ENCODE measurements at regions of chr14 and their contacts with region 1.

Region 1: GRCh38 chr14:96204151-96205058 is at the start of gene BDKRB2:
- DNase-seq: peak; percentile 92
- ATAC-seq: peak; percentile 86
- H3K4me3 ChIP-seq: peak within 1 kb of the TSS; percentile 88
- H3K27ac ChIP-seq: peak within 1 kb of the TSS; percentile 97
- H3K4me1 ChIP-seq: peaks cover 22% of the 10 kb centered on the region
- H3K27me3 ChIP-seq: no peaks in the 10 kb centered on the region
- CTCF ChIP-seq: no peak
- POLR2A ChIP-seq: peak; percentile 93
- RAD21 ChIP-seq: peak; percentile 42
- total RNA-seq, gene BDKRB2: 60.5 and 73.1 TPM in 2 replicates

Region 2: GRCh38 chr14:96122496-96122895 is 81.9 kb before region 1 on chr14:
- CTCF ChIA-PET with region 1: interaction called, 3 read pairs
- POLR2A ChIA-PET with region 1: interaction called, 4 read pairs
- dilution Hi-C with region 1: no loop called
- in situ Hi-C with region 1: no loop called
- intact Hi-C with region 1: loop called (anchors 1 kb)
- DNase-seq: peak; percentile 90
- ATAC-seq: peak; percentile 82
- H3K4me3 ChIP-seq: no peak overlapping the region
- H3K27ac ChIP-seq: peak overlapping the region; percentile 95
- H3K4me1 ChIP-seq: peaks cover 29% of the 10 kb centered on the region
- H3K27me3 ChIP-seq: no peaks in the 10 kb centered on the region
- CTCF ChIP-seq: no peak
- POLR2A ChIP-seq: no peak
- RAD21 ChIP-seq: 0 out of 2 replicates have a peak, but pooled peaks have one; percentile 9

Region 3: GRCh38 chr14:96145116-96145864 is 59.1 kb before region 1 on chr14:
- CTCF ChIA-PET with region 1: no interaction called
- POLR2A ChIA-PET with region 1: no interaction called
- dilution Hi-C with region 1: no loop called
- in situ Hi-C with region 1: no loop called
- intact Hi-C with region 1: loop called (anchors 2 kb)
- DNase-seq: peak; percentile 91
- ATAC-seq: peak; percentile 86
- H3K4me3 ChIP-seq: peak overlapping the region; percentile 4; the same call in 1 of the 2 replicates
- H3K27ac ChIP-seq: peak overlapping the region; percentile 98
- H3K4me1 ChIP-seq: peaks cover 13% of the 10 kb centered on the region
- H3K27me3 ChIP-seq: no peaks in the 10 kb centered on the region
- CTCF ChIP-seq: no peak
- POLR2A ChIP-seq: no peak
- RAD21 ChIP-seq: 0 out of 2 replicates have a peak, but pooled peaks have one; percentile 22

Region 4: DNA sequence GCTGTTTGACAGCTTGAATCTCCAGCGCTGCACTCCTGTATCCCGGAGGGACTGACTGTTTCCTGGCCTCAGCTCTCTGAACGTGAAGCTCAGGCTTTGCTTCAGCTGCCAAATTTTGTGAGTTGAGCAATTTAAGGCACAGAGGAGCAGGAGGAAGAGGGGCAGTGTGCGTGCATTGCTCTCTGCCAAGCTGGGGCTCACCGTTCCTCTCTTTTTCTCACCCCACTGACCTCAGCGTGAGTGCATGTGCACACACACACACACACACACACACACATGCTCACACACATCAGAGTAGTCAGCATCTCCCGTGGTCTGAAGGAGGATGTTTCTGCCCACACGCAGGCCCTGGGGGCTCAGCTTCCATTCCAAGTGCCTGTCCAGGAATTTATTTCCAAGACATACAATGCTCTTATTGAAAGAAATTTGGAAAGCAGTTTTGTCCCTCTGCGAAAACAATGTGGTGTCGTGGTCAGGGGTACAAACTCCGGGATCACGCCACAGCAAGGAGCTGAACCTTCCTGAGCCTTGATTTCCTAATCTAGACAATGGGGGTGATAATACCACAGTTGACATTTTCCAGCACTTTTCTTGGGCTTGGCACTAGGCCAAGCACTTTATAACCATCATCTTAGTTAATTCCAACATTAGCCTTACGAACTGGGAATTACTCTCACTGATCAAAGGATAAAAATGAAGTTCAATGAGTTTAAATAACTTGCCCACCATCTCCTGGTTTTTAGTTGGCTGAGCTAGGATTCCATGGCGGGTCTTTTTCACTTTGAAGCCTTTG is 27.4 kb before region 1 on chr14:
- CTCF ChIA-PET with region 1: no interaction called
- POLR2A ChIA-PET with region 1: interaction called, 4 read pairs
- dilution Hi-C with region 1: no loop called
- in situ Hi-C with region 1: no loop called
- intact Hi-C with region 1: loop called (anchors 2 kb)
- DNase-seq: peak; percentile 91
- ATAC-seq: peak; percentile 78
- H3K4me3 ChIP-seq: no peak overlapping the region
- H3K27ac ChIP-seq: peak overlapping the region; percentile 71
- H3K4me1 ChIP-seq: peaks cover 30% of the 10 kb centered on the region
- H3K27me3 ChIP-seq: no peaks in the 10 kb centered on the region
- CTCF ChIP-seq: no peak
- POLR2A ChIP-seq: no peak
- RAD21 ChIP-seq: no peak

Region 5: GRCh38 chr14:96255501-96256366 is 51.3 kb after region 1 on chr14 and contains the start of gene BDKRB1:
- CTCF ChIA-PET with region 1: no interaction called
- POLR2A ChIA-PET with region 1: interaction called, 11 read pairs
- dilution Hi-C with region 1: no loop called
- in situ Hi-C with region 1: no loop called
- intact Hi-C with region 1: no loop called
- DNase-seq: peak; percentile 96
- ATAC-seq: peak; percentile 24
- H3K4me3 ChIP-seq: peak within 1 kb of the TSS; percentile 59
- H3K27ac ChIP-seq: peak within 1 kb of the TSS; percentile 92
- H3K4me1 ChIP-seq: peaks cover 34% of the 10 kb centered on the region
- H3K27me3 ChIP-seq: no peaks in the 10 kb centered on the region
- CTCF ChIP-seq: no peak
- POLR2A ChIP-seq: peak; percentile 97
- RAD21 ChIP-seq: no peak
- total RNA-seq, gene BDKRB1: 51.4 and 56.5 TPM in 2 replicates

Region 6: DNA sequence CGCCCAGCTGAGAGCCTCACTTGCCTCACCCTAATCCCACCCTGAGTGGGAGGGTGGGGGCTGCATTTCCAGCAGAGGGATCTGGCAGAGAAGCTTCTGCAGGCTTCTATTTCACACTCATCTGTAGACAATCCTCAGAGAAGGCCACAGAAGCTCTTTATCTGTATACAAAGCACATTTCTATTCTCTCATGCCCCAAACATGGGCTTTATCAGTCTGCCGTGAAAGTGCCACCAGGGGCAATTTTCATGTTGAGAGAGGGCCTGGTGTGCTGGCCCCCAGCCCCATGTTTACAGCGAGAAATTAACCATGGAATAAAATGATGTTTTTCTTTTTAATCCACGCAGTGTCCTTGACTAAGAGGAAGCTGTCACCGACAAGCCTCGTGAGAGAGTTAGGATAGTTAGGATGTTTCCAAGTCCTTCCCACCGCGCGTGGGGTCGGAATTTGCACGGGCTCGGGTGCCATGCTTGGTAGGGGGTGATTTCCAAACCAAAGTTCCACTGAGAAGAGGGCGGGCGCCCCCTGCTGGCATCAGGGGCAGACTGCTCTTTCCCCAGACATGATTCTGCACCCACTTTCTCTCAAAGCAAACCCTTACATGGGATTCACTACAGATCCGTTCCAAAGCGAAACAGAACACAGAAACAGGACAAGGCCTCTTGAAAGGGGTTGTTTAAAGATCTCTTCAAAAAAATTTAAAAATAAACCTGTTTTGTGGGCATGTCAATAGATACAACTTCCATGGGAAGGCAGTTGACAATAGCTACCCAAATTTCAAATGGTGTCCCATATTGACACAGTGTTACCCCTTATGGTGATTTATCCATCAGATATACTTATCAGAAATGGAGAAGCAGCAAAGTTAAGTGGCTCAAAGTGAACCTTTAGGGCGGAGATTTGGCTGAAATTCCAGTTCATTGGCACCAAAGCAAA is 71.0 kb after region 1 on chr14:
- CTCF ChIA-PET with region 1: interaction called, 9 read pairs
- POLR2A ChIA-PET with region 1: no interaction called
- dilution Hi-C with region 1: no loop called
- in situ Hi-C with region 1: no loop called
- intact Hi-C with region 1: loop called (anchors 1 kb)
- DNase-seq: peak; percentile 90
- ATAC-seq: peak; percentile 72
- H3K4me3 ChIP-seq: no peak overlapping the region
- H3K27ac ChIP-seq: peak overlapping the region; percentile 94
- H3K4me1 ChIP-seq: peaks cover 23% of the 10 kb centered on the region
- H3K27me3 ChIP-seq: no peaks in the 10 kb centered on the region
- CTCF ChIP-seq: peak; percentile 99
- POLR2A ChIP-seq: peak; percentile 61
- RAD21 ChIP-seq: peak; percentile 98

Region 7: GRCh38 chr14:96486705-96487104 is 282.3 kb after region 1 on chr14:
- CTCF ChIA-PET with region 1: no interaction called
- POLR2A ChIA-PET with region 1: interaction called, 19 read pairs
- dilution Hi-C with region 1: no loop called
- in situ Hi-C with region 1: no loop called
- intact Hi-C with region 1: no loop called
- DNase-seq: no peak
- ATAC-seq: no peak
- H3K4me3 ChIP-seq: no peak overlapping the region
- H3K27ac ChIP-seq: no peak overlapping the region
- H3K4me1 ChIP-seq: no peaks in the 10 kb centered on the region
- H3K27me3 ChIP-seq: no peaks in the 10 kb centered on the region; the same call in 1 of the 2 replicates
- CTCF ChIP-seq: no peak
- POLR2A ChIP-seq: no peak
- RAD21 ChIP-seq: no peak